IMR-90 (cell line): ENCODE measurements at regions of chr13 and their contacts with region 1.

Region 1: DNA sequence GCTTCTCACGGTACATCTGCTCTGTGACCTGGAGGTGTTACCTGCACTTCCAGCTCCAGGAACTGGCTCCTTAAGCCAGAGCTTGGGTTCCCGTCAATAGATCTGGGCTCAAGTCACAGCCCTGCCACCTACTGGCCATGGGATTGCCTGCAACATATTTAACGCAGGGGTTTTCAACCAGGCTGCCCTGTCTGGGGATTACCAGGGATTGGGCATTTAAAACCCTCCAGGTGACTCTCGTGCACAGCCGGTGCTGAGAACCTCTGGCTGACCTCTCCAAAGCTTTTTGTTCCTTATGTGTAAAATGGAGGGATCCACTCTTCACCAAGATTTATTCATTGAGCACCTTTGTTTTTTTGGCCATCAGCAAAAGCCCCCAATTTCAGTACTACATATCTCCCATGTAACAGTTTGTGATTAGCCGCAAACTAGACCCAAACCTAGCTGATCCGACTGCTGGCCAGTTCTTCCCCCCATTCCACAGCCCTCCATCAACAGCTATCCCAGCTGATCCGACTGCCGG is 76.6 kb upstream of the STK24 start:
- DNase-seq: peak; percentile 71
- ATAC-seq: peak; percentile 100
- H3K4me3 ChIP-seq: no peak overlapping the region
- H3K27ac ChIP-seq: no peak overlapping the region
- H3K4me1 ChIP-seq: no peaks in the 10 kb centered on the region
- H3K27me3 ChIP-seq: peaks cover 2% of the 10 kb centered on the region; the same call in 1 of the 2 replicates
- CTCF ChIP-seq: peak; percentile 87
- POLR2A ChIP-seq: no peak
- RAD21 ChIP-seq: peak; percentile 85

Region 2: GRCh38 chr13:98445340-98446233 is 207.9 kb before region 1 on chr13:
- CTCF ChIA-PET with region 1: interaction called, 8 read pairs
- POLR2A ChIA-PET with region 1: no interaction called
- dilution Hi-C with region 1: loop called (anchors 25 kb)
- in situ Hi-C with region 1: loop called (anchors 5 kb)
- intact Hi-C with region 1: loop called (anchors 1 kb)
- DNase-seq: peak; percentile 41
- ATAC-seq: peak; percentile 82
- H3K4me3 ChIP-seq: no peak overlapping the region
- H3K27ac ChIP-seq: no peak overlapping the region
- H3K4me1 ChIP-seq: peaks cover 13% of the 10 kb centered on the region
- H3K27me3 ChIP-seq: no peaks in the 10 kb centered on the region
- CTCF ChIP-seq: peak; percentile 84
- POLR2A ChIP-seq: no peak
- RAD21 ChIP-seq: peak; percentile 86

Region 3: DNA sequence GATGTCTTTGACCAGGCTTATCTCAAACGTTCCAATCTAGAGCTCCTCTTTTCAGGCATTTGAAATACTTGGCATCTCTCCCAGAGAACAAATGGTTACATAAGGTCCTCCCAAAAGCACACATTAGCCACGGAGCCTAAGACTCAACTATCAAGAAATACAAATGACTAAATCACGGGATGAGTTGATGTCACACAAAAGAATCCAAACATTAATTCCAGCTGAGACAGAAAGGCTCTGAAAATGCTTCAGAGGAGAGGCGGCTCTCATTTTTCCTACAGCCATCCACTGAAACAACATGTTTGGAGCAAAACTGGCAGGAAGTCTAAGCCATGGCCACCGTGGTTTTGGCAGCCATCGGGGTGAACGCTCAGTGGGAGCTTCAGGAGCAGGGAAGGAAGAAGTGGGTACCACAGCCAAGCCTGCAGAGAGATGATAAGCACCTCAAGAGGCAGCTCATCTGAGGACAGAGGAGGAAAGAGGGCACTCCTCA is 199.1 kb before region 1 on chr13:
- CTCF ChIA-PET with region 1: interaction called, 5 read pairs
- POLR2A ChIA-PET with region 1: no interaction called
- dilution Hi-C with region 1: loop called (anchors 25 kb)
- in situ Hi-C with region 1: loop called (anchors 5 kb)
- intact Hi-C with region 1: loop called (anchors 2 kb)
- DNase-seq: peak; percentile 94
- ATAC-seq: peak; percentile 75
- H3K4me3 ChIP-seq: no peak overlapping the region
- H3K27ac ChIP-seq: peak overlapping the region; percentile 91
- H3K4me1 ChIP-seq: peaks cover 14% of the 10 kb centered on the region
- H3K27me3 ChIP-seq: no peaks in the 10 kb centered on the region
- CTCF ChIP-seq: no peak
- POLR2A ChIP-seq: no peak
- RAD21 ChIP-seq: no peak

Region 4: GRCh38 chr13:98466634-98467236 is 186.8 kb before region 1 on chr13:
- CTCF ChIA-PET with region 1: interaction called, 3 read pairs
- POLR2A ChIA-PET with region 1: no interaction called
- dilution Hi-C with region 1: loop called (anchors 25 kb)
- in situ Hi-C with region 1: no loop called
- intact Hi-C with region 1: loop called (anchors 5 kb)
- DNase-seq: peak; percentile 55
- ATAC-seq: peak; percentile 77
- H3K4me3 ChIP-seq: no peak overlapping the region
- H3K27ac ChIP-seq: no peak overlapping the region
- H3K4me1 ChIP-seq: 0 out of 2 replicates have a peak, but pooled peaks cover 3% of the 10 kb centered on the region
- H3K27me3 ChIP-seq: no peaks in the 10 kb centered on the region
- CTCF ChIP-seq: peak; percentile 70
- POLR2A ChIP-seq: no peak
- RAD21 ChIP-seq: peak; percentile 59

Region 5: GRCh38 chr13:98910501-98910951 is 257.0 kb after region 1 on chr13:
- CTCF ChIA-PET with region 1: no interaction called
- POLR2A ChIA-PET with region 1: no interaction called
- dilution Hi-C with region 1: no loop called
- in situ Hi-C with region 1: no loop called
- intact Hi-C with region 1: no loop called
- DNase-seq: peak; percentile 70
- ATAC-seq: peak; percentile 66
- H3K4me3 ChIP-seq: no peak overlapping the region
- H3K27ac ChIP-seq: peak overlapping the region; percentile 66
- H3K4me1 ChIP-seq: peaks cover 6% of the 10 kb centered on the region
- H3K27me3 ChIP-seq: no peaks in the 10 kb centered on the region
- CTCF ChIP-seq: no peak
- POLR2A ChIP-seq: no peak
- RAD21 ChIP-seq: no peak